HepG2 (cell line): ENCODE measurements at regions of chr12 and their contacts with region 1.

Region 1: DNA sequence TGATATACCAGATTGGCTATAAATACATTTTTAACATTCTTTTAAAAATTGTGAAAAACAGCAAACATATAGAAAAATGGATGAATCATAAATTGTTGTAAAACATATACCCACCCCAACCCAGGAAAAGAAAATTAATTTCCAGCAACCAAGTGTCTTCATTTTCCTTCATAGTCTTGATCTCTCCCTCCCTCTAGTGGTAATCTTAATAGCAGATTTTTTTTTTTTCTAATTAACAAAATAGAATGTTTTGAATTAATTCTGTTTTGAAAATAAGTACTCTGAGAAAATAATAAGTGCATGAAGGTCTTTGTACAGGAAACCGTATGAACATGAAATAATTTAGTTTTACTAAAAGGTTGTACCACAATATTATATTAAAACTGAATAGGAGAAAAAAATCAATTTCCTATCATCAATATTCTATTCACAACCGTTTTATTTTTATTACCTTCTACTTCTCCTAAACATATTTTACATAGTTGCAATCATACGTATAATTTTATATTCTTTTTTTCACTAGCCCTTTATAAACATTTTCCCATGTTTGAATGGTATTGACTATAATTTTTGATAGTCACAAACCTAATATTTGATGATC is 7.0 kb downstream of the ETNK1 start:
- DNase-seq: no peak
- ATAC-seq: no peak
- H3K4me3 ChIP-seq: no peak overlapping the region
- H3K27ac ChIP-seq: no peak overlapping the region
- H3K4me1 ChIP-seq: peaks cover 24% of the 10 kb centered on the region
- H3K27me3 ChIP-seq: no peaks in the 10 kb centered on the region
- CTCF ChIP-seq: peak; percentile 21; the same call in 1 of the 2 replicates
- EP300 ChIP-seq: no peak
- POLR2A ChIP-seq: no peak
- RAD21 ChIP-seq: no peak

Region 2: DNA sequence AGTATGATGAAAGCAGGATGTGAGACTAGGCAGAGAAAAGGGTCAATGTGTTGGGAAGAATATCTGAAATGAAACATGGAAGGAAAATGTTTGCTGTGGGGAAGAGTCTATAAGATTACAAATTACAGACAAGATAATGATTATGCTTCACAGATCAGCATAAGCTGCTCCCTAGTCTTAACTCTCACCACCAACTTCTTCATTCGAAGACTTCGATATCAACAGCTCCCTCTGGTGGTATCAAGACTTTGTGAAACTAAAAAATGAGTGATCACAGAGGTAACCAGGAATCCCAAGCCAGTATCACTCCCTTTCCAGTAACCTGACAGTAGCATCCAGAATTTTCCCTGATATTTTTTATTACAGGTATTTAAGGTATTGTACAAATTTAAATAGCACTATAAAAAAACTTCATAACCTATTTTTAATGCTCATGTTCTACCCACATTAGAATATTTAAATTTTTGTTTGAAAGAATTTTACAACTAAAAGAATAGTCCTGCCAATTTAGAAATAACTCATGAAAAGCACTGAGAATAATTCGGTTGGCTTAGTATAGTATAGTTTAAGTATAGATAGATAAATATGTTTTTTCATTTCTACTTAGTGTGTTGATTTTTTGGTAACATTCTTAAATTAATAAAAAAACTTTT is 172.0 kb before region 1 on chr12:
- CTCF ChIA-PET with region 1: no interaction called
- POLR2A ChIA-PET with region 1: no interaction called
- in situ Hi-C with region 1: no loop called
- intact Hi-C with region 1: loop called (anchors 5 kb)
- DNase-seq: peak; percentile 43
- ATAC-seq: peak; percentile 54
- H3K4me3 ChIP-seq: no peak overlapping the region
- H3K27ac ChIP-seq: no peak overlapping the region
- H3K4me1 ChIP-seq: no peaks in the 10 kb centered on the region
- H3K27me3 ChIP-seq: no peaks in the 10 kb centered on the region
- CTCF ChIP-seq: peak; percentile 55
- EP300 ChIP-seq: no peak
- POLR2A ChIP-seq: no peak
- RAD21 ChIP-seq: no peak

Region 3: GRCh38 chr12:22529281-22530060 is 102.5 kb before region 1 on chr12:
- CTCF ChIA-PET with region 1: interaction called, 16 read pairs
- POLR2A ChIA-PET with region 1: no interaction called
- in situ Hi-C with region 1: no loop called
- intact Hi-C with region 1: loop called (anchors 1 kb)
- DNase-seq: peak; percentile 59
- ATAC-seq: peak; percentile 87
- H3K4me3 ChIP-seq: no peak overlapping the region
- H3K27ac ChIP-seq: no peak overlapping the region
- H3K4me1 ChIP-seq: no peaks in the 10 kb centered on the region
- H3K27me3 ChIP-seq: no peaks in the 10 kb centered on the region
- CTCF ChIP-seq: peak; percentile 53
- EP300 ChIP-seq: no peak
- POLR2A ChIP-seq: no peak
- RAD21 ChIP-seq: no peak